ENCODE measurements at regions of chr10 and their contacts with region 1.

Region 1: GRCh38 chr10:49407552-49408137 is 11.8 kb upstream of the DRGX start:
- DNase-seq: peak; percentile 82
- H3K4me3 Mint-ChIP-seq: no peak overlapping the region
- H3K27ac Mint-ChIP-seq: no peak overlapping the region
- H3K4me1 Mint-ChIP-seq: no peaks in the 10 kb centered on the region
- H3K27me3 Mint-ChIP-seq: peaks cover 40% of the 10 kb centered on the region

Region 2: DNA sequence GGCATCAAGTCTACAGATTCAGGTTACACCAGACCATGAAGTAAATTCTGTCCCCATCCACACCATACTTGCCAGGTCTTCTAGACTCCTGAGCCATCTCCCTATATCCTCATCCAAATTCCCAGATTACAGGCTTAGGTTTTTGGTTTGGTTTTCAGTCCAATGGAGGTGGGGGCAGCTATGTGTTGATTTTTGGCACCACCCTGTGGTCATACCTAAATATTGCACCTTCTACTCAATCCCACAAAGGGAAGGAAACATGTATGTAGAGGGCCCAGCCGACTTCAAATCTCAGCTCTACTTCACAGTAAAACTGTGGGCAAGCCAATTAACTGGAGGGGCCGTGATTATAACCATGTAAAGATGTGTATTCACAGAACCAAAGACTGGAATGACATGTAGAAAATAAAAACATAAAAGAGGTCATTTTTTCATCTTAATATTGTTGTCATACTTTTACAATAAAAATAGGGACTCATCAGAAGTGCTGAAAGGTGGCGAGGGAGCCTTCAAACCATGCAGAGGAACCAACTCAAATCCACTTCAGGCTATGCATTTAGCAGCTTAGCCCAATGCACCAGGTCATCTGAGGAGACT is 111.4 kb after region 1 on chr10:
- CTCF ChIA-PET with region 1: interaction called, 21 read pairs
- intact Hi-C with region 1: loop called (anchors 1 kb)
- DNase-seq: peak; percentile 30
- H3K4me3 Mint-ChIP-seq: no peak overlapping the region
- H3K27ac Mint-ChIP-seq: no peak overlapping the region
- H3K4me1 Mint-ChIP-seq: no peaks in the 10 kb centered on the region
- H3K27me3 Mint-ChIP-seq: no peaks in the 10 kb centered on the region

Measured in activated naive CD4-positive, alpha-beta T cell treated with anti-CD3 and anti-CD28 coated beads for 36 hours (primary cell).